HEK293 (cell line): ENCODE measurements at regions of chrX and their contacts with region 1.

Region 1: GRCh38 chrX:154013614-154014360 is 5.9 kb downstream of the IRAK1 start:
- H3K4me3 ChIP-seq: no peak overlapping the region
- H3K27ac ChIP-seq: no peak overlapping the region
- H3K4me1 ChIP-seq: no peaks in the 10 kb centered on the region
- CTCF ChIP-seq: peak; percentile 83

Region 2: DNA sequence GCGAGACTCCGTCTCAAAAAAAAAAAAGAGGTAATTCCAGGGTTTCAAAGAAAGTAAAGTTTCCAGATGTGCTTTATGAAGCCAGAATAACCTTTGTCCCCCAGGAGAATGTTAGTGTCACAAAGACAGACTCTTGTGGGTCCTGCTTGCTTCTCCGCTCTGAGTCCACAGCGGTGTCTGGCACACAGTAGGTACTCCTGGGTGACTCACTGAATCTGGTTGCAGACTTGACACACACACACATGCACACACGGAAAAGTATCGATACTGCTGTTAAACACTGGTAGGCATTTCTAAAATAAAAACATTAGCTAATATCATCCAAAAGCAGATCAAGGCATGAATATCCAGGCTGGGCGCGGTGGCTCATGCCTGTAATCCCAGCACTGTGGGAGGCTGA is 18.3 kb before region 1 on chrX:
- CTCF ChIA-PET with region 1: interaction called, 14 read pairs
- POLR2A ChIA-PET with region 1: interaction called, 4 read pairs
- H3K4me3 ChIP-seq: no peak overlapping the region
- H3K27ac ChIP-seq: no peak overlapping the region
- H3K4me1 ChIP-seq: no peaks in the 10 kb centered on the region
- CTCF ChIP-seq: no peak

Region 3: GRCh38 chrX:154029439-154029838 is 15.7 kb after region 1 on chrX:
- CTCF ChIA-PET with region 1: interaction called, 29 read pairs
- POLR2A ChIA-PET with region 1: no interaction called
- H3K4me3 ChIP-seq: no peak overlapping the region
- H3K27ac ChIP-seq: no peak overlapping the region
- H3K4me1 ChIP-seq: no peaks in the 10 kb centered on the region
- CTCF ChIP-seq: no peak

Region 4: DNA sequence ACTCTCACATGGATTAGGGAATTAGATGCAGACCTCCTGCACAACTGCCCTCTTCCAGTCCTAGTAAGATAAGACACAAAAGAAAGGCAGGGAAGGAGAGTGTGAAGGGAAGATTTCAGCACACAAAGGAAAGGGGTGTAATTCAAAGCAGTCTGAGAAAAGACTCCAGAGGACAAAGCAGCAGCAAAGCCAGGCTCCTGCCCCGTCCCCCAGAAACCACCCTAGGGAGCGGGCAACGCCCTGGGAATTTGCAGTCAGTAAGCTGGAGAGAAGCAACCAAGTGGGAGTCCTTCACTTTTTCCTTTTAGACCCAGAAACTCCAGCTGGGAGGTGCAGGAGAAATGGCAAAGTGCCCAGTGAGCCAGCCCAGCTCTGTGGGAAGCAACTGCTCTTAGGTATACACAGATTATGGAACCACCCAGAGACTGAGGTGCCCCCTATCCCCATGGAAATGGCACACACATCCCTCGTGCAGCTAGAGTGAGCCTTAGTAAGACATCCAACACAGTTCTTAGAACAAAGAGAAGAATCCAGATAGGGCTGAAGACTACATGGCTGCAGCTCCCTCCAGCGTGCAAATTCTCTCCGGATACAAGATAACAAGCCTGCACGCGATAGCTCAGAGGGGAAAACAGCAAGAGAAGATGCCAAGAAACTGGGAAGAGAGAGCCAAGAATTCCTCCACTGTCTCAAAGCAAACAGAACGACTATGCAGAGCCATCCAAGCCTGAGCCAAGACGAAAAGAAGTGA is 32.4 kb after region 1 on chrX:
- CTCF ChIA-PET with region 1: interaction called, 35 read pairs
- POLR2A ChIA-PET with region 1: no interaction called
- H3K4me3 ChIP-seq: no peak overlapping the region
- H3K27ac ChIP-seq: no peak overlapping the region
- H3K4me1 ChIP-seq: peaks cover 4% of the 10 kb centered on the region; the same call in 1 of the 2 replicates
- CTCF ChIP-seq: 0 out of 2 replicates have a peak, but pooled peaks have one; percentile 15